ENCODE measurements at regions of chr5 and their contacts with region 1.

Region 1: GRCh38 chr5:140401362-140402257 is at the start of gene ANKHD1:
- DNase-seq: peak; percentile 99
- total RNA-seq, gene ANKHD1: 73.0 TPM

Region 2: GRCh38 chr5:140107312-140108083 is 294.1 kb before region 1 on chr5:
- intact Hi-C with region 1: no loop called
- DNase-seq: peak; percentile 96

Region 3: GRCh38 chr5:140346348-140347101 is 55.1 kb before region 1 on chr5 and contains the start of gene HBEGF:
- intact Hi-C with region 1: no loop called
- DNase-seq: peak; percentile 94
- total RNA-seq, gene HBEGF: 73.9 TPM

Region 4: GRCh38 chr5:140547508-140548299 is 146.1 kb after region 1 on chr5 and contains the start of gene EIF4EBP3:
- intact Hi-C with region 1: loop called (anchors 5 kb)
- DNase-seq: peak; percentile 99
- total RNA-seq, gene EIF4EBP3: 20.6 TPM